IMR-90 (cell line): ENCODE measurements at regions of chr14 and their contacts with region 1.

Region 1: GRCh38 chr14:86902176-86902950 is 1090.6 kb downstream of the GALC start:
- DNase-seq: no peak
- ATAC-seq: no peak
- H3K4me3 ChIP-seq: no peak overlapping the region
- H3K27ac ChIP-seq: no peak overlapping the region
- H3K4me1 ChIP-seq: no peaks in the 10 kb centered on the region; the same call in 1 of the 2 replicates
- H3K27me3 ChIP-seq: no peaks in the 10 kb centered on the region
- CTCF ChIP-seq: no peak
- POLR2A ChIP-seq: no peak
- RAD21 ChIP-seq: no peak

Region 2: GRCh38 chr14:86288336-86288735 is 614.0 kb before region 1 on chr14:
- CTCF ChIA-PET with region 1: no interaction called
- POLR2A ChIA-PET with region 1: no interaction called
- dilution Hi-C with region 1: no loop called
- in situ Hi-C with region 1: no loop called
- intact Hi-C with region 1: loop called (anchors 10 kb)
- DNase-seq: no peak
- ATAC-seq: no peak
- H3K4me3 ChIP-seq: no peak overlapping the region
- H3K27ac ChIP-seq: no peak overlapping the region
- H3K4me1 ChIP-seq: peaks cover 2% of the 10 kb centered on the region; the same call in 1 of the 2 replicates
- H3K27me3 ChIP-seq: no peaks in the 10 kb centered on the region
- CTCF ChIP-seq: no peak
- POLR2A ChIP-seq: no peak
- RAD21 ChIP-seq: no peak